Right ventricle myocardium inferior (tissue), 1 donor: ENCODE measurements at regions of chr2 and their contacts with region 1.

Region 1: DNA sequence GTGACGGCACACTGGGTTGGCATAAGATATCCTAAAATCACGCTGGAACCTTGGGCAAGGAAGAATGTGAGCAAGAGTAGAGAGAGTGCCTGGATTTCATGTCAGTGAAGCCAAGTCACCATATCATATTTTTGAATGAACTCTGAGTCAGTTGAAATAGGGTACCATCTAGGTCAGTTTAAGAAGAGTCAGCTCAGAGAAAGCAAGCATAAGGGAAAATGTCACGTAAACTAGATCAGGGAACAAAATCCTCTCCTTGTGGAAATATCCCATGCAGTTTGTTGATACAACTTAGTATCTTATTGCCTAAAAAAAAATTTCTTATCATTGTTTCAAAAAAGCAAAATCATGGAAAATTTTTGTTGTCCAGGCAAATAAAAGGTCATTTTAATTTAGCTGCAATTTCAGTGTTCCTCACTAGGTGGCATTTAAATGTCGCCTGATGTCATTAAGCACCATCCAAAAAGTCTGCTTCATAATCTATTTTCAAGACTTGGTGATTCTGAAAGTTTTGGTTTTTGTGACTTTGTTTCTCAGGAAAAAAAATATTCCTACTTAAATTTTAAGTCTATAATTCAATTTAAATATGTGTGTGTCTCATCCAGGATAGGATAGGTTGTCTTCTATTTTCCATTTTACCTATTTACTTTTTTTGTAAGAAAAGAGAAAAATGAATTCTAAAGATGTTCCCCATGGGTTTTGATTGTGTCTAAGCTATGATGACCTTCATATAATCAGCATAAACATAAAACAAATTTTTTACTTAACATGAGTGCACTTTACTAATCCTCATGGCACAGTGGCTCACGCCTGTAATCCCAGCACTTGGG is 19.6 kb downstream of the RSAD2 start:
- DNase-seq: no peak
- ATAC-seq: peak; percentile 48

Region 2: DNA sequence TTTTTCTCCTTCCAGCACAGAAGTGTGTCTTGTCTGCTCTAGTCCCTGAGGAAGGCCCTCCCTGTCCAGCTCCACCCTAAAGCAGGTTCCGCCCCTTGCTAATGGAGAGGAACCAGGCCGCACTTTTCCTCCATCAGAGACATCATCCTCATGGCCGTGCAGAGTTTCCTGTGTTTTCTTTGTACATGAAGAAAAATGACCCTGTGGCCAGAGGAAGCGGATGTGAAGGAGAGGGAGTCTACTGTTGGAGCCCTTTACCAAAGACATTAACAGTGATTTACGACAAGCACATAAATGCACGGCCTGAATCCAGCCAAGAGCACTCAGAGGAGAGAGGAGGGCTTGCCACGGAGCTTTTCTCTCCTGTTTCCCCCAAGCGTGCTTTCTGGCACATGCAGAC is 129.6 kb after region 1 on chr2:
- intact Hi-C with region 1: no loop called
- DNase-seq: no peak
- ATAC-seq: no peak

Region 3: GRCh38 chr2:7044261-7045250 is 147.4 kb after region 1 on chr2:
- intact Hi-C with region 1: loop called (anchors 1 kb)
- DNase-seq: no peak
- ATAC-seq: peak; percentile 83